Activated B cell treated with CpG ODN at 0.5 μM for 24 hours (primary cell): ENCODE measurements at regions of chr12 and their contacts with region 1.

Region 1: DNA sequence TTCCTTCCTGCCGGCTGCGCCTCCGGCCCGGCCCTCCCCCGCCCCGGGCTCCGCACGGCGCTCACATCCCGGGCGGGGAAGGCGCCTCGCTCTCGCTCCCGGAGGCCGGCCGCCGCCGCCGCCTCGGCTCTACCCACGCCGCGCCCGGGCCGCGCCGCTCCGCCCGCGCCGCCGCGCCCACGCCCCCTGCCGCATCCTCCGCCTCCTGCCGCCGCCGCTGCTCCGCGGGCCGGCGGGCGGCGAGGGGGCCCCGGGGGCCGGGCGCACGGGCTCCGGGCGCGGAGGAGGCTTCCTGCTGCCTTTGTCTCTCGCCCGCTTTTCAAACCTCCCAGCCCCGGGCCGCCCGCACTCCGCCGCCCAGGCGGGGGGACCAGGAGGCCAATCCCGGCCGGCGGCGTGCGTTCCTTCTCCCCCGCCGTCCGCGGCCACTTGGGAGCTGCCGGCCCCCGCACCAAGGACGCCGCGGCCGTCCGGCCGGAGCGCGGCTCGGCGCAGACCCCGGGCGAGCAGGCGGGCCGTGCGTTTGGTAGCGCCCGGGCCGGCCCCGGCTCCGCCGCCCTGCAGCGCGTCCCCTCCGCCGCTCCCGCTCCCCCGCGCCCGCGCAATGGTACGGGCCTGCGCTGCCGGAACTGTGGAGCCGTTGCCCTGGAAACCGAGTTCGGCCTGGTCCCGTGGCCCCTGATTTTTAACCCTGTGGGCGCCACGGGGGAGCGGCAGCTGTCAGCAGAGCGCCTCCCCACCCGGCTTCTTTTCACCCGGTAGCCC is at the start of gene FBXL14:
- DNase-seq: peak; percentile 91
- ATAC-seq: peak; percentile 65
- H3K4me3 Mint-ChIP-seq: peak within 1 kb of the TSS; percentile 92
- H3K27ac Mint-ChIP-seq: peak within 1 kb of the TSS; percentile 92
- H3K4me1 Mint-ChIP-seq: peaks cover 52% of the 10 kb centered on the region
- H3K27me3 Mint-ChIP-seq: no peaks in the 10 kb centered on the region
- CTCF ChIP-seq: no peak
- total RNA-seq, gene FBXL14: 19.4 and 21.6 TPM in 2 replicates

Region 2: GRCh38 chr12:990661-991349 is 603.6 kb before region 1 on chr12 and contains the start of gene ERC1:
- CTCF ChIA-PET with region 1: no interaction called
- POLR2A ChIA-PET with region 1: interaction called, 3 read pairs
- intact Hi-C with region 1: loop called (anchors 2 kb)
- DNase-seq: peak; percentile 94
- ATAC-seq: peak; percentile 89
- H3K4me3 Mint-ChIP-seq: peak within 1 kb of the TSS; percentile 95
- H3K27ac Mint-ChIP-seq: peak within 1 kb of the TSS; percentile 91
- H3K4me1 Mint-ChIP-seq: peaks cover 29% of the 10 kb centered on the region
- H3K27me3 Mint-ChIP-seq: no peaks in the 10 kb centered on the region
- CTCF ChIP-seq: no peak
- total RNA-seq, gene ERC1: 51.1 and 57.0 TPM in 2 replicates

Region 3: DNA sequence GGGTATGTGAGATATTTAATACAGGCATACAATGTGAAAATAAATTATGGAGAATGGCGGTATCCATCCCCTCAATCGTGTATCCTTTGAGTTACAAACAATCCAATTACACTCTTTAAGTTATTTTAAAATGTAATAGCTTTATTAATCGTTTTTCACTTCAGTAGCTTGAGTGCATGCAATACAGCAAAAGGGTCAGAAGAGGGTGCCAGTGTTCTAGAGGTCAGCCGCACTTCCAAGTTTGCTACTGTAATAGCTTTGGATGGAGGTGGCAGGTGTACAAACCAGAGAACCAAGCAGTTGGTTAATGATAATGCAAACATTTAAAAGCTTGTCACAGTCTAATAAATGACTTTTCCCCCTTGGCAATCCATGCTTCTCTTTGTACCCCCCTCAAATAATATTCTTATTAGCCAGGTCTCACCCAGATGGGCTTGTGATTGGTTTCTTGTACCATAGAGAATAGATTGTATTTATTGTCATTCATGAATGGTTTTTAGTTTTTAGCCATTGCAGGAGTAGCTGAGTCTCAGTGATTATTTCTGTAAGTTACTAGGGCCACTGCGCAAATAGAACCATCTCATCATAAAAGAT is 476.4 kb before region 1 on chr12:
- CTCF ChIA-PET with region 1: interaction called, 47 read pairs
- POLR2A ChIA-PET with region 1: no interaction called
- intact Hi-C with region 1: no loop called
- DNase-seq: peak; percentile 40
- ATAC-seq: peak; percentile 81
- H3K4me3 Mint-ChIP-seq: no peak overlapping the region
- H3K27ac Mint-ChIP-seq: no peak overlapping the region
- H3K4me1 Mint-ChIP-seq: peaks cover 2% of the 10 kb centered on the region
- H3K27me3 Mint-ChIP-seq: no peaks in the 10 kb centered on the region
- CTCF ChIP-seq: peak; percentile 42

Region 4: DNA sequence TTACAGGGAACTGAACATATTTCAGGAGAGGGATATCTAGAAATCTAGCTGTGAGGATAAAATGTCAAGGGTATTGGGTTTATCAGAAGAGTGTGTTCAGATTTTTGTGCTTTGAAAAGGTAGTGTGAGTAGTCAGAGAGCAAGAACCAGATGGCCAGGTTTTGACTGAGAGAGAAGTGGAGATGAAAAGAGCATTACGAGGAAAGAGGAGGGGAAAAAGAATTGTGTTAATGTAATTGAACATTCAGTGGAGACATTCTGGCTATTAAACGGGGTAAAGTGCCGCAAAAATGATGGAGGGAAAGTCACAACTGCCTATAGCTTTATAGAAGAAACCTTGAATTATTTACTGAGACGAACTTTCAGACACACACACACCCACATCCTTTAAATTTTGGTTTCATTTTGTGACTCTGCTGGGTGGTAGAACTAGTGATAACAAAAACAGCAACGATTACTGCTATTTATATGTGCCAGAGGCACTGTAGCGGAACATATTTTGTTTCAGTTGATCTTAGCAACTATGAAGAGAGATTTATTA is 389.8 kb before region 1 on chr12:
- CTCF ChIA-PET with region 1: no interaction called
- POLR2A ChIA-PET with region 1: no interaction called
- intact Hi-C with region 1: loop called (anchors 5 kb)
- DNase-seq: no peak
- ATAC-seq: peak; percentile 87
- H3K4me3 Mint-ChIP-seq: no peak overlapping the region
- H3K27ac Mint-ChIP-seq: no peak overlapping the region
- H3K4me1 Mint-ChIP-seq: peaks cover 39% of the 10 kb centered on the region
- H3K27me3 Mint-ChIP-seq: no peaks in the 10 kb centered on the region
- CTCF ChIP-seq: no peak

Region 5: DNA sequence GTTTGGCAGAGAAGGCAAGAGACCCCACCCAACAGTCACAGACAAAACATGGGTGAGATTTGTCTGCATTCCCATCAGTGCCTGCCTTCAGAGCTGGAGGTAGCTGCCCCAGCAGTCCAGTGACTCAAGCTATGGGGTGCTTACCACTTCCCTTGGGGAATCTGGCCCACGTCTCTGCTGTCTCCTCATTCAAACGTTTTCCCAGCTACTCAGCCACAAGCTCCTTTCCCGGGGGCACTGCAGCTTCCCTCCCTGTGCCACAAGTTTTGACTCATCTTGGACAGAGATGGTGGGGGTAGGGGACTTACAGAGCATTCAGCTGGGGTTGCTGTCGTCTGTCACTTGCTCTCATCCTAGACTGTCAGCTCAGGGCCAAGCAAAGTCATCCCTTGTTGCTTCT is 66.7 kb before region 1 on chr12:
- CTCF ChIA-PET with region 1: no interaction called
- POLR2A ChIA-PET with region 1: no interaction called
- intact Hi-C with region 1: no loop called
- DNase-seq: no peak
- ATAC-seq: no peak
- H3K4me3 Mint-ChIP-seq: no peak overlapping the region
- H3K27ac Mint-ChIP-seq: no peak overlapping the region
- H3K4me1 Mint-ChIP-seq: peaks cover 27% of the 10 kb centered on the region
- H3K27me3 Mint-ChIP-seq: peaks cover 52% of the 10 kb centered on the region
- CTCF ChIP-seq: no peak

Region 6: DNA sequence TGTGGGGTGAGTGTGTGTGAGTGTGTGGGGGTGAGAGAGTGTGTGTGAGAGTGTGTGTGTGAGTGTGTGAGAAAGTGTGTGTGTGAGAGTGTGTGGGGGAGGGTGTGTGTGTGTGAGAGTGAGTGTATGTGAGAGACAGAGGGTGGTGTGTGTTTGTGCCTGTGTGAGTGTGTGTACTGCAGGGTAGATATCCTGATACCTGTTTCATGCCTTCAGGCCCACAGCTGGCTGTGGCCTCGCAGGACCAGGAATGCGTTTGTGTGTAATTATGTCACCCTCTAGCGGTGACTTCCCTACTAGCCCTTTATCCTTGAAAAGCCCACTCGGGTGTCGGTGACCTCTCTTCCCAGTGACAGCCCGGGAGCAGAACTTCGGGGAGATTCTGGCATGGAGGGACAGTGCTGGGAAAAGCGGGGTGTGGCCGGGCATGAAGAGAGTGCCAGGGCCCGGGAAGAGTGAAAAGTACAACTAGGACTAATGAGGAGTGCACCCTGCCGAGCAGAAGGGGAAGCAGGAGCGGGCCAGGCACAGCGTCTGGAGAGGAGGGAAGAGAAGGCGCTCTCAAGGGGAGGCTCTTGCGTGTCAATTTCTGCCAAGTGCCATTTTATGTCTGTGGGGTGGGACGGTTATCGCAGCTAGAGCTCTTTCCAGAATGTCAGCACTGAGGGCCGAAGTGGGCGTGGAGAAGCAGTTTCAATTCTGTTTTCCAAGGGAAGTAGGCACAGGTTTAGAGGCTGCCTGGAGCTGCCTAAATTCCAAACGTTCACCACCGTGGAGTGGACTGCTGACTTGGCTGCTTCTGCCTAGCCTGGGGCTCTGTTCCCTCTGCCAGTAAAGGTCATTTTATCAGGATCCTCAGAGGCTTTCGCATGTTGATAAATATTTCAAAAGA is 10.9 kb after region 1 on chr12:
- CTCF ChIA-PET with region 1: interaction called, 16 read pairs
- POLR2A ChIA-PET with region 1: interaction called, 21 read pairs
- intact Hi-C with region 1: loop called (anchors 1 kb)
- DNase-seq: peak; percentile 31
- ATAC-seq: peak; percentile 55
- H3K4me3 Mint-ChIP-seq: peak overlapping the region; percentile 91
- H3K27ac Mint-ChIP-seq: peak overlapping the region; percentile 78
- H3K4me1 Mint-ChIP-seq: peaks cover 44% of the 10 kb centered on the region
- H3K27me3 Mint-ChIP-seq: no peaks in the 10 kb centered on the region
- CTCF ChIP-seq: no peak

Region 7: DNA sequence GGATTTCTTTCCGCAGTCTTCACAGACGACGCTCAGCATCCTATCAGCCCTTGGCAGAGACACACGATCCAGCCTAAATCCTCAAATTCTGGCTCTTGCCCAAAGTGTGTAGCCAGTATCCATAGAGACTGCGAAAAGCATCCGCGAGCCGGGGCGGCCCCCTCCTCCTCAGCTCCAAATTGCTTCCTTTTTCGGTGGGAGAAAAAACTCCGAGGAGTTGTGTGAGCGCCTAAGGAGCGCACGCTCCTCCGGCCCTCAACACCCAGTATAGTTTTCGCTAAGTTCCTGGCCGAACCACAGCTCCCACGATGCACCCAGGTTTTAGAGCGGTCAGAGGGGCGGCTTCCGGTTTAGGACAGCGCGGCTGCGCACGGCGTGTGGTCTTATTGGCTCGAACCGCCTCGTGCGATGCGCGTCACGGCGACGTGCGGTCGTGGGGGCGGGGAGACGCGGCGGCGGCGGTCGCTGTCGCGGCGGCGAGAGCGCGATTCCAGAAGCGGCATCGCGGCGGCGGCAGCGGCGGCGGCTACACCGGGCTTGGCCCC is 96.2 kb after region 1 on chr12 and contains the start of gene ADIPOR2:
- CTCF ChIA-PET with region 1: no interaction called
- POLR2A ChIA-PET with region 1: no interaction called
- intact Hi-C with region 1: loop called (anchors 1 kb)
- DNase-seq: peak; percentile 94
- ATAC-seq: peak; percentile 96
- H3K4me3 Mint-ChIP-seq: peak within 1 kb of the TSS; percentile 88
- H3K27ac Mint-ChIP-seq: peak within 1 kb of the TSS; percentile 98
- H3K4me1 Mint-ChIP-seq: peaks cover 39% of the 10 kb centered on the region
- H3K27me3 Mint-ChIP-seq: peaks cover 5% of the 10 kb centered on the region
- CTCF ChIP-seq: no peak
- total RNA-seq, gene ADIPOR2: 43.0 and 43.1 TPM in 2 replicates